ENCODE measurements at regions of chr11 and their contacts with region 1.

Region 1: DNA sequence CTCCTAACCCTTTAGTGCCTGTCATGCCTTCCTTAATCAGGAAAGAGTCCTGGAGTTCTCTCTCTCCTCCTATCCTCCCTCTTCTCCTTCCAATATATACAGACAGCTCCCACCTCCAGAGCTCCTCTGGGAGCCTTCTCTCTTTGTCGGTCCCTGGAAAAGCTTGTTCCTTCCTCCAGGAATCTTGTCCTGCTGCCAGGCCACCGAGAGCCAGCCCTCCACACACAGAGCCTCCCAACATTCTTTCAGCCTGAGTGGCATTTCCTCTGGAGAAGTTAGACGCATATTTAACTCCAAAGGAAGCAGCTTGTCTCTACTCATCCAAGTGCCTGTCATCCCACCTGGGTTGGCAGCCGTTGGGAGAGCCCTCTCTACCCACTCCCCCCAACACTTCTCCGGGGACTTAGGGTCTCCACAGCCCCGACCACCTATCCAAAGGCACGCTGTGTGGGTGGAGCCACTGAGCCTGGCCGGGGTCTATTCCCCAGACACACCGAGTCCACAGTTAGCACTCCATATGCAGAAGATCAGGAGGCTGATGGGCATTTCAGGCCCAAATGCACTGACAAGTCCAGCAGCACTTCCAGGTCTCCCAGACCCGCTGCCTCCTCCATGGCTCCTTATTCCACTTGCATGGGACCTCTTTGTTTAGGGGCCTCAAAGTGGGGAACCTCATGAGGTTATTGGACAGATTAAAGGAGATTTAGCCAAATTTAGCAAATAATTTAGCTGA is 31.1 kb downstream of the DKK3 start:
- DNase-seq: no peak
- H3K4me3 ChIP-seq: no peak overlapping the region
- H3K4me3 Mint-ChIP-seq: no peak overlapping the region
- H3K27ac ChIP-seq: no peak overlapping the region
- H3K27ac Mint-ChIP-seq: peak overlapping the region in 1 of 8 donors; percentile 6
- H3K4me1 ChIP-seq: no peaks in the 10 kb centered on the region
- H3K4me1 Mint-ChIP-seq: peaks cover 10 to 21% (median 16%) of the 10 kb centered on the region in 3 donors
- H3K27me3 ChIP-seq: no peaks in the 10 kb centered on the region
- H3K27me3 Mint-ChIP-seq: peaks cover 0 to 7% of the 10 kb centered on the region in 2 donors

Region 2: GRCh38 chr11:11856638-11857037 is 120.7 kb before region 1 on chr11:
- CTCF ChIA-PET with region 1: no interaction called
- POLR2A ChIA-PET with region 1: no interaction called
- DNase-seq: peak in 3 of 5 donors; percentile 49 to 58 (median 51)
- H3K4me3 ChIP-seq: no peak overlapping the region
- H3K4me3 Mint-ChIP-seq: peak overlapping the region; percentile 2 to 73 (median 51)
- H3K27ac ChIP-seq: no peak overlapping the region
- H3K27ac Mint-ChIP-seq: peak overlapping the region in 7 of 8 donors; percentile 8 to 83 (median 69)
- H3K4me1 ChIP-seq: peaks cover 47% of the 10 kb centered on the region
- H3K4me1 Mint-ChIP-seq: peaks cover 70 to 90% (median 84%) of the 10 kb centered on the region in 3 donors
- H3K27me3 ChIP-seq: no peaks in the 10 kb centered on the region
- H3K27me3 Mint-ChIP-seq: no peaks in the 10 kb centered on the region

Region 3: GRCh38 chr11:11966826-11967668 is 10.3 kb before region 1 on chr11:
- CTCF ChIA-PET with region 1: interaction called, 11 read pairs
- POLR2A ChIA-PET with region 1: no interaction called
- DNase-seq: peak; percentile 45 to 78 (median 51)
- H3K4me3 ChIP-seq: no peak overlapping the region
- H3K4me3 Mint-ChIP-seq: no peak overlapping the region
- H3K27ac ChIP-seq: no peak overlapping the region
- H3K27ac Mint-ChIP-seq: peak overlapping the region in 2 of 8 donors; percentile 6 to 79
- H3K4me1 ChIP-seq: no peaks in the 10 kb centered on the region
- H3K4me1 Mint-ChIP-seq: peaks cover 10 to 11% (median 10%) of the 10 kb centered on the region in 3 donors
- H3K27me3 ChIP-seq: peaks cover 3% of the 10 kb centered on the region
- H3K27me3 Mint-ChIP-seq: peaks cover 0 to 4% of the 10 kb centered on the region in 2 donors